HCT116 (cell line): ENCODE measurements at regions of chr2 and their contacts with region 1.

Region 1: DNA sequence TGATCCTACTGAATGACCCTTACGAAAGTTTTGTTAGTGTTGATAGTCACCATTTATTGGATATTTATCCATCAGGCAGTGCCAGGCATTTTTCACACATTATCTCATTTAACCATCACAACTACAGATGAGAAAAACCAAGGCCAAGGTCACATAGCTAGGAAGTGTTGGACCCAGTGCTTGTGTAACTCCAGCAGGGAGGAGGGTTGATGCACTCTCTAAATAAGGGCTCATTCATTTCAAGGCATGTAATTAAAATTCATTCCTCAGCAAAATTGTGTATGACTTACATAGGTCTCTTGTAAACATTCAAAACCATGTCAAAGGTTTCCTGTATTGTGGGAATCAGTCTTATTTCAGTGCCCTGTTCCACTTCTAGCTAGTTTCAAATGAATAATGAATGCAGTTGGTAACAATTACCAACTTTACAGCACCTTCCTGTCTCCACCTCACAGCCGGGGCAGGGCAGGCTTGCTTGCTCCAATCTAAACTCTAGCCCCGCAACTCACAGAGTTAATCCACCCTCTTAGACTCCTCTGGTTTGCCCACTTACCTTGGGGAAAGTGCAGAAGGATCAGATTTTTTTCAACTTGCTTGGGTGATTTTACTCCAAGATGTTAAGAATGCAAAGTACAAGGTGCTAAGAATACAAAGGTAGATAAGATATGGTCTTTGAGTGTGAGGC is 5.8 kb upstream of the MAPRE3 start:
- DNase-seq: no peak
- ATAC-seq: no peak
- H3K4me3 ChIP-seq: no peak overlapping the region
- H3K27ac ChIP-seq: no peak overlapping the region
- H3K4me1 ChIP-seq: peaks cover 0 to 15% of the 10 kb centered on the region in 2 experiments; a peak in 2 of 4 replicates
- H3K27me3 ChIP-seq: peaks cover 5% of the 10 kb centered on the region; the same call in 1 of the 2 replicates
- CTCF ChIP-seq: no peak
- POLR2A ChIP-seq: no peak
- RAD21 ChIP-seq: no peak

Region 2: DNA sequence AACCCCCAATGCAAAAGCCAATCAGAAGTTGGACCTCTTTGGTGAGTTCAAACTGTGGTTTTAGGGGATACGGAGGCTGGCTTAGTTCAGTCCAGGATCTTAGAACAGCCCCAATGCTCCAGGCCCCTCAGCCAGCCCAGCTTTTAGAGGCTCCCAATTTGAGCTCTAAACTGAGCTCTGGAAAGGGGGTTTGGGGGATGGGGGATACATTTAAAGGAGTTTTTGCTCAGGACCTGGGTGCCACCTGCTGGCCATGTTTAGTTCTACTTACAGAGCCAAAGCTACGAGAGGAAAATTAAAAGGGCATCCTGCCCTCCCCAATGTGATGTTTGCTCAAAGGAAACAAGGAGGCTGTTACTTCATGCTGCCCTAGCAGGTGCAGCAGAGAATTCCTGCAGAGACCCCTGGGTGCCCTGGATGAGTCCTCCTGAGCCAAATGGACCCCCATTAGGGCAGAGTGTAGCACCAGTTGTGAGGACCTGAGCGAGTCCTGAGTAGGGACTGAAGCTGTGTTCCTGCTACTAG is 52.3 kb after region 1 on chr2:
- CTCF ChIA-PET with region 1: interaction called, 154 read pairs
- POLR2A ChIA-PET with region 1: interaction called, 14 read pairs
- RAD21 ChIA-PET with region 1: interaction called, 28 to 32 read pairs
- intact Hi-C with region 1: loop called (anchors 1 kb)
- DNase-seq: peak; percentile 50
- ATAC-seq: peak; percentile 74
- H3K4me3 ChIP-seq: no peak overlapping the region
- H3K27ac ChIP-seq: no peak overlapping the region
- H3K4me1 ChIP-seq: peaks cover 25 to 50% of the 10 kb centered on the region in 2 experiments
- H3K27me3 ChIP-seq: no peaks in the 10 kb centered on the region
- CTCF ChIP-seq: peak; percentile 68 to 85 (median 84)
- POLR2A ChIP-seq: no peak
- RAD21 ChIP-seq: peak; percentile 92